Transverse colon (tissue), 4 donors: ENCODE measurements at regions of chr13 and their contacts with region 1.

Region 1: GRCh38 chr13:45367358-45367757 is 26.4 kb upstream of the TPT1 start:
- DNase-seq: peak; percentile 81
- H3K4me3 ChIP-seq: no peak overlapping the region
- H3K27ac ChIP-seq: peak overlapping the region in 3 of 4 donors; percentile 10 to 43 (median 40)
- H3K4me1 ChIP-seq: peaks cover 3 to 19% (median 10%) of the 10 kb centered on the region in 4 donors
- H3K27me3 ChIP-seq: no peaks in the 10 kb centered on the region
- CTCF ChIP-seq: no peak
- EP300 ChIP-seq: no peak
- POLR2A ChIP-seq: no peak

Region 2: GRCh38 chr13:44516771-44517170 is 850.6 kb before region 1 on chr13:
- in situ Hi-C with region 1: no loop called
- intact Hi-C with region 1: loop called (anchors 5 kb)
- DNase-seq: no peak
- H3K4me3 ChIP-seq: no peak overlapping the region
- H3K27ac ChIP-seq: no peak overlapping the region
- H3K4me1 ChIP-seq: no peaks in the 10 kb centered on the region
- H3K27me3 ChIP-seq: no peaks in the 10 kb centered on the region
- CTCF ChIP-seq: no peak
- EP300 ChIP-seq: no peak
- POLR2A ChIP-seq: no peak

Region 3: GRCh38 chr13:45340422-45340925 is 26.9 kb before region 1 on chr13:
- in situ Hi-C with region 1: no loop called
- intact Hi-C with region 1: no loop called
- DNase-seq: peak; percentile 92
- H3K4me3 ChIP-seq: peak overlapping the region; percentile 86 to 99 (median 90)
- H3K27ac ChIP-seq: peak overlapping the region; percentile 99 to 100 (median 100)
- H3K4me1 ChIP-seq: peaks cover 30 to 58% (median 50%) of the 10 kb centered on the region in 4 donors
- H3K27me3 ChIP-seq: no peaks in the 10 kb centered on the region
- CTCF ChIP-seq: peak; percentile 38 to 88 (median 56)
- EP300 ChIP-seq: no peak
- POLR2A ChIP-seq: no peak

Region 4: DNA sequence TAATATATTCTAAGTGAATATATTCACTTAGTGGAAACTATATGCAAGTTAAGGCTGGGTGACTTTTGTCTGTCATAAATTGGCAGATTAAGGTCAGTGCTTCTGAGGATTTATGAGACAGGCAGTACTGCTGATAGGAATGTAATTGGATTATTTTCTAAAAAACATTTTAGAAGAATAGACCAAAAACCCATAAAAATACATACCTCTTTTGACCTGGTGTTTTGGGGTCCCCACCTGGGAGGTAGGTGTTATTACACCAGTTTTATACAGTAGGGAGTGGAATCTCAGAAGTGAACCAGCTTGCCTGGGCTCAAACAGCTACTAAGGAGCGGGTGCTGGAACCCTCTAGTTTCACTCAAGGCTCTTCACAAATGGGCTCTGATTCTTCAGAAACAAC is 122.7 kb after region 1 on chr13:
- in situ Hi-C with region 1: loop called in 2 of 4 experiments (anchors 25 kb)
- intact Hi-C with region 1: no loop called
- DNase-seq: no peak
- H3K4me3 ChIP-seq: no peak overlapping the region
- H3K27ac ChIP-seq: no peak overlapping the region
- H3K4me1 ChIP-seq: no peaks in the 10 kb centered on the region
- H3K27me3 ChIP-seq: no peaks in the 10 kb centered on the region
- CTCF ChIP-seq: peak in 3 of 5 experiments; percentile 6 to 25 (median 7)
- EP300 ChIP-seq: no peak
- POLR2A ChIP-seq: no peak

Region 5: DNA sequence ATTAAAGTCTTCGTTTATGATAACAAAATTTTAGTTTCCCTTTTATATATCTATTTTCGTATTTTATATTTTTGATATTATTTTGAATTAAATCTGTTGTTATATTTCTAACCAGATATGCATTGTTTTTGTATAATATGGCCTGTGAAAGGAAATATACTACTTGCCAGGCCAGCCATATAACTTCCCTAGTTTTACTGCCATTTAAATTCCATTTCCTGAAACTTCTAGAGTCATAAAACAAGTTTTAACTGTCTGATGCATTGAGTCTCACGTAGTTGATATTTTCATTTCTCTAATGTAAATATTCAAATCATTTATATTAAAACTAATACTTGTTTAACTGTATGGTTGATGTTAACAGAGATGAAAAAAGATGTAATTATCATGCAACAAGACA is 1416.1 kb after region 1 on chr13:
- in situ Hi-C with region 1: no loop called
- intact Hi-C with region 1: no loop called
- DNase-seq: no peak
- H3K4me3 ChIP-seq: no peak overlapping the region
- H3K27ac ChIP-seq: no peak overlapping the region
- H3K4me1 ChIP-seq: peaks cover 0 to 8% (median 0%) of the 10 kb centered on the region in 4 donors
- H3K27me3 ChIP-seq: no peaks in the 10 kb centered on the region
- CTCF ChIP-seq: no peak
- EP300 ChIP-seq: no peak
- POLR2A ChIP-seq: no peak